H1 (cell line): ENCODE measurements at regions of chr17 and their contacts with region 1.

Region 1: GRCh38 chr17:1516388-1517161 is at the start of gene INPP5K:
- DNase-seq: peak; percentile 89 to 91
- H3K4me3 ChIP-seq: peak within 1 kb of the TSS; percentile 85 to 92 (median 90)
- H3K27ac ChIP-seq: peak within 1 kb of the TSS; percentile 75
- H3K4me1 ChIP-seq: peaks cover 0 to 6% (median 3%) of the 10 kb centered on the region in 4 experiments; a peak in 5 of 7 replicates
- H3K27me3 ChIP-seq: no peaks in the 10 kb centered on the region
- CTCF ChIP-seq: no peak
- EP300 ChIP-seq: peak in 1 of 2 experiments; percentile 2; a peak in 1 of 3 replicates
- POLR2A ChIP-seq: peak in 1 of 2 experiments; percentile 81; a peak in 2 of 3 replicates
- RAD21 ChIP-seq: no peak
- total RNA-seq, gene INPP5K: 20.4 and 21.0 TPM in 2 replicates

Region 2: DNA sequence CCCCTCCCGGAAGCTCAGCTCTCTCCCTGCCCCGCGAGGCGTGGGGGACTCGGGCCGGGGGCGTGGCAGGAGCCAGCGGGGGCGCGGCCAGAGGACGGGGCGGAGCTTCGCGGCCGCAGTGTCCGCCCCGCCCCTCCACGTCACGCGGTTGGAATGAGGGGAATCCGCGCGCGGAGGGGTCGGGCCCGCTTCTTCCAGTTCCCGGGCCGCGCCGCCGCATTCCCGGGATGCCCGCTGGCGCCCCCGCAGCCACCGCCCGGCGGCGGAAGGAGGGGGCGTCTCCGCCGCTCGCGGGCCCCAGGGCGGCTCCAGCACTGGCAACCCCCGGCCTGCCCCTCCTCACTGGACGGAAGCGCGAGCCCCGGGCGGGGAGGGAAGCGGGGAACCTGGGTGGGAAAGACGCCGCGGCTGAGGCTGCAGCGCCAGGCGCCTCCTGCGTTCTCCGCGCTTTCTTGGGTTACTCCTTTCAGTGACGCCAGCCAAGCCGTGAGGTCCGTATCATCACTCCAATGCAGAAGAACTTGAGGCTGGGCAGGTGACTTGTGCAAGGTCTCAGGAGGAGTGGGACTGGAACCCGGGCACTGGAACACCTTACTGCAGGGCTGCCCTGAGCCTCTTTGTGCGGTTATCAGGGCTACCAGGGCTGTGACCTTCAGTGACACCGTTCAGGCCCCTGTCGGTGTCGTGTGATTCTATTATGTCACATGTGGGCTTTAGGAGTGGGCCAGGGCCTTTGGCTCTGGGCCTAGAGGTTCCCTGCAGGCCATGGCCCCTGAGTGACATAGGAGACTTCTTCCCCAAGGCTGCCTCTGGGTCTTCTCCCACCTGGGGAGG is 28.3 kb before region 1 on chr17:
- CTCF ChIA-PET with region 1: interaction called, 18 read pairs
- POLR2A ChIA-PET with region 1: interaction called, 30 read pairs
- DNase-seq: peak in 1 of 2 experiments; percentile 87
- H3K4me3 ChIP-seq: peak overlapping the region; percentile 24 to 74 (median 48)
- H3K27ac ChIP-seq: no peak overlapping the region
- H3K4me1 ChIP-seq: peaks cover 0 to 24% (median 17%) of the 10 kb centered on the region in 4 experiments; a peak in 6 of 7 replicates
- H3K27me3 ChIP-seq: peaks cover 0 to 6% (median 0%) of the 10 kb centered on the region in 4 experiments; a peak in 2 of 7 replicates
- CTCF ChIP-seq: no peak
- EP300 ChIP-seq: peak in 1 of 2 experiments; percentile 54; a peak in 1 of 3 replicates
- POLR2A ChIP-seq: 0 out of 3 replicates have a peak, but pooled peaks of 1 of the 2 experiments have one; percentile 30
- RAD21 ChIP-seq: no peak

Region 3: DNA sequence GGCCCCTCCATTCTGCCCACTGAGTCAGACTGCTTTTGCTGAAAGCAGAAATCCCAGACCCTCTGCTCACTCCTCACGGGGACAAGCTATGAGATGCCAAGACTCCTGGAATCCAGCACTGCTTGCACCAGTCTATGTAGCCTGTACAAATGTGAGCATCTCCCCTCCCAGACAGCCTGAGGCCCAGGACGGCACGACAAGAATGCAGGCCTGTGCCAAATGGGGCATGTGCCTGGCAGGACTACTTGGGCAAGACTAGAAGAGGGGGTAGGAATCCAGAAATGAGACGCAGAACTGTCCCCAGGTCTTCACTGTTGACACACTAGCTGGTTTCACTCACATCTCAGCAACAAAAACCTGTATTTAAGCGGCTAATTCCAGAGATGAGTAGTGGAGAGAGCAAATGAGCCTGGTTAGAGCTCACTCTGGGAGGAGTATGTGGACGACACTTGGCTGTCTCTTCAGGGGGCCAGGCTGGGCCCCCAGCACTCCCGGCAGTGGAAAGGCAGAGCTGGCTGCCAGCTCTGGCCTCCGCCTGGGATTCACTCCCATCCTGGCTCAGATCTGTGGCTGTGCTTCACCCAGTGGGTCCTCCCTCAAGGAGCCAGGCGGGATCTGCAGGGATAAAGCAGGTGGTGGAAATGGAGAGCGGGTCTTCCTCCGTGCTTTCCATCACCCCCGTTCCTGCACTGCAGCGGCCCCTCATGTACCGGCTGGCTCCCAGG is 21.1 kb before region 1 on chr17:
- CTCF ChIA-PET with region 1: interaction called, 26 read pairs
- POLR2A ChIA-PET with region 1: interaction called, 30 read pairs
- DNase-seq: no peak
- H3K4me3 ChIP-seq: no peak overlapping the region
- H3K27ac ChIP-seq: no peak overlapping the region
- H3K4me1 ChIP-seq: peaks cover 0 to 9% (median 4%) of the 10 kb centered on the region in 4 experiments; a peak in 4 of 7 replicates
- H3K27me3 ChIP-seq: no peaks in the 10 kb centered on the region
- CTCF ChIP-seq: no peak
- EP300 ChIP-seq: no peak
- POLR2A ChIP-seq: no peak
- RAD21 ChIP-seq: no peak

Region 4: DNA sequence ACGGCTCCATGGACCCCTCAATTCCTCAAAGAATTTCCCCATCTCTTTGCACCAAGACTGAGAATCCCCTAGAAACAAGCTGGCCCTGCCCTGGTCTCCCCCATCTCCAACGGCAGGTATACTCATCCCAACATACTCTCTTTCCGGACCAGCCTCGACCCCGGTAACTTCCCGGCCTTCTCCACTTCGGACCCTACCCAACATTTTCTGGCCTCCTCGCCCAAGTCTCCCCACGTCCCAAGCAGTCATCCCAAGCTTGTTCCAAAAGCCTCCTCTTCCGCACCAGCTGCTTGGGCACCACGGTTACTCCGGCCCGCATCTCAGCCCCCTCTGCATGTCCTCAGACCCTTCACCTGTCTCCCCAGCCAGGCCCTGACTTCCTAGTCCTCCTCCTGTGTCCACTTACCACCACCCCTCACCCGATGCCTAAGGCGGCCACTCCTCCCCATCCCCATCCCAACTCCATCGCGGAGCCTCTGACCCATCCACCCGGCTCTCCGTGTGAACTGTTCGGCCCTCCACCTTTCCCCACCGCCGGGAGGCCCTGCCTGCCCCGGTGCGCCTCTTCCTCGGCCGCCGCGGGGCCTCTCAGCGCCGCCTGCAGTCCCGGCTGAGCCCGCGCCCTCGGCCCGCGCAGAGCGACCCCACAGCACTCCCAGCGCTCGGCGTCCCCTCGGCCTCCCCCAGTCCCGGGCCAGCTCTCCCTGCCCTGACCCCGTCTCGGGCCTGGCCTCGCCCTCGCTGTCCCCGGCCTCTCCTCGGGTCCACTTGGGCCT is 45.0 kb after region 1 on chr17:
- CTCF ChIA-PET with region 1: no interaction called
- POLR2A ChIA-PET with region 1: interaction called, 14 read pairs
- DNase-seq: peak in 1 of 2 experiments; percentile 62
- H3K4me3 ChIP-seq: peak overlapping the region; percentile 45 to 89 (median 68)
- H3K27ac ChIP-seq: no peak overlapping the region
- H3K4me1 ChIP-seq: peaks cover 0 to 10% (median 5%) of the 10 kb centered on the region in 4 experiments; a peak in 4 of 7 replicates
- H3K27me3 ChIP-seq: peaks cover 0 to 4% (median 0%) of the 10 kb centered on the region in 4 experiments; a peak in 1 of 7 replicates
- CTCF ChIP-seq: no peak
- EP300 ChIP-seq: no peak
- POLR2A ChIP-seq: no peak
- RAD21 ChIP-seq: no peak

Region 5: GRCh38 chr17:1590031-1590748 is 73.6 kb after region 1 on chr17:
- CTCF ChIA-PET with region 1: no interaction called
- POLR2A ChIA-PET with region 1: no interaction called
- DNase-seq: no peak
- H3K4me3 ChIP-seq: no peak overlapping the region
- H3K27ac ChIP-seq: no peak overlapping the region
- H3K4me1 ChIP-seq: peaks cover 0 to 14% (median 8%) of the 10 kb centered on the region in 4 experiments; a peak in 6 of 7 replicates
- H3K27me3 ChIP-seq: no peaks in the 10 kb centered on the region
- CTCF ChIP-seq: no peak
- EP300 ChIP-seq: no peak
- POLR2A ChIP-seq: no peak
- RAD21 ChIP-seq: no peak